Vagina (tissue), 2 donors: ENCODE measurements at regions of chr10 and their contacts with region 1.

Region 1: DNA sequence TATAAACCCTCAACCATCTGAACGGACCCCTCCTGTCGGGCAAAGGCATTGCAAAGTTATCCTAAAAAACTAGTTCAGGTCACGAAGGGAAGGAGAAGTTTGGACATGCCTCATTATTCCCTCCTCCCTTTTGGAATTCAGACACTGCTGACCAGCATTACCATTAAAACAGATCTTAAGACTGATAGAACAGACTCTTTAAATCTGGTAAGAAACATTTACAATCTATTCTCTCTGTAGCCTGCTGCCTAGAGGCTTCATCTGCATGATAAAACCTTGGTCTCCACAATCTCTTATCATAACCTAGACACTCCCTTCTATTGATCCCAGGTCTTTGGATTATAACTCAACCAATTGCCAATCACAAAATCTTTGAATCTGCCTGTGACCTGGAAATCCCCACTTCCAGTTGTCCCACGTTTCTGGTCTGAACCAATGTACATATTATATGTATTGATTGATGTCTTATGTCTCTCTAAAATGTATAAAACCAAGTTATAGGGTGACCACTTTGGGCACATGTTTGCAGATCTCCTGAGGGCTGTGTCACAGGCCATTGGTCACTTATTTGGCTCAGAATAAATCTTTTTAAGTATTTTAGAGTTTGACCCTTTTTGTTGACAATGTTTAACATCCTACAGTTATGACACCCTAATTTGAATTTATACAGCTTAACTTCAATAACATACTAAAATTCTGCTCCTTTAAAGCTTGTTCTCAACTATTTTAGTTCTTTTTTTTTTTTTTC is 23.5 kb upstream of the CNNM2 start:
- DNase-seq: no peak
- H3K4me3 ChIP-seq: no peak overlapping the region
- H3K27ac ChIP-seq: no peak overlapping the region
- H3K4me1 ChIP-seq: no peaks in the 10 kb centered on the region
- H3K27me3 ChIP-seq: no peaks in the 10 kb centered on the region
- CTCF ChIP-seq: no peak
- POLR2A ChIP-seq: no peak

Region 2: DNA sequence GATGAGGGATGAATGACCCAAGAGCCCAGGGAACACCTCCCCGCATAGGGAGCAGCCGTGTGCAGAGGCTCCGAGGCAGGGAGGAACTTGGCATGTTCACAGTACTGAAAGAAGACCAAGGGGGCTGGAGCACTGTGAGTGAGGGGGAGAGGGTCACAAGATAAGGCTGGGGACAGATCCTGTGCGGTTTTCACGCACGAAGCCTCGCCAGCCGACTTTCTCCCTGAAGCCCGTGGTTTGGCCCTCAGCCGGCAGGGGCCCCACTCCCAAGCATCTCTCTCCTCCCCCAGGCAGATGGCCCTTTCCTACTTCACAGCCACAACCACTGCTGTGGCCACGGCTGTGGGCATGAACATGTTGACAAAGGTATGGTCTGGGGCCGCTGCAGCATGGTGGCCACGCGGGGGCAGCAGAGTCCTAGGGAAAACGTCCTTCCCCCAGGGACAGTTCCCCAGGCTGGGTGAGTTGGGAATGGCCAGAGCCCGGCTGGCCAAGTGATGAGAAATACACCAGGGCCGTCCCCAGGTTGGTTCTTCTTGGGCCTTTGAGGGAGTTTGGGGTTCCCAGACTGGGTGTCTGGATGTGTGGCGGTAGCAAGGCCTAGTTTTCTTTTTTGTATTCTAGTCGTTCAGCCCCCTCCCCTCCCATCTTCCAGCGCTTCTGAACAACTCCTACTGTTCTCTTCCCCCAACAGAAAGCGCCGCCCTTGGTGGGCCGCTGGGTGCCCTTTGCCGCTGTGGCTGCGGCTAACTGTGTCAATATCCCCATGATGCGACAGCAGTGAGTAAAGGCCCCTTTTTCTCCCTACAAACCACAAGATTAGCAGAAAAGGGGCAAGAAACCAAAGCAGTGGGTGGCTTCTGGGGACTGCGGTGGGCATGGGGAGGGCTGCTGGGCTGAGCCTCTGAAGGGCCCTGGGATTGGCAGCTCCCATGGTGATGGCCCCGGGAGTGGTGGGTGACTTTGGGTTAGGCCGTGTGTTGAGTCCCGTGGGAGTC is 165.3 kb before region 1 on chr10:
- intact Hi-C with region 1: loop called (anchors 5 kb)
- DNase-seq: no peak
- H3K4me3 ChIP-seq: no peak overlapping the region
- H3K27ac ChIP-seq: no peak overlapping the region
- H3K4me1 ChIP-seq: no peaks in the 10 kb centered on the region
- H3K27me3 ChIP-seq: no peaks in the 10 kb centered on the region
- CTCF ChIP-seq: peak; percentile 85 to 92 (median 91)
- POLR2A ChIP-seq: no peak

Region 3: GRCh38 chr10:102743588-102744373 is 150.9 kb before region 1 on chr10 and contains the start of gene WBP1L:
- intact Hi-C with region 1: no loop called
- DNase-seq: peak; percentile 99 to 100
- H3K4me3 ChIP-seq: peak within 1 kb of the TSS; percentile 88 to 99
- H3K27ac ChIP-seq: peak within 1 kb of the TSS; percentile 91
- H3K4me1 ChIP-seq: peaks cover 41% of the 10 kb centered on the region
- H3K27me3 ChIP-seq: no peaks in the 10 kb centered on the region
- CTCF ChIP-seq: no peak
- POLR2A ChIP-seq: peak in 1 of 2 donors; percentile 80
- total RNA-seq, gene WBP1L: 80.8 TPM